ENCODE measurements at regions of chr6 and their contacts with region 1.

Region 1: DNA sequence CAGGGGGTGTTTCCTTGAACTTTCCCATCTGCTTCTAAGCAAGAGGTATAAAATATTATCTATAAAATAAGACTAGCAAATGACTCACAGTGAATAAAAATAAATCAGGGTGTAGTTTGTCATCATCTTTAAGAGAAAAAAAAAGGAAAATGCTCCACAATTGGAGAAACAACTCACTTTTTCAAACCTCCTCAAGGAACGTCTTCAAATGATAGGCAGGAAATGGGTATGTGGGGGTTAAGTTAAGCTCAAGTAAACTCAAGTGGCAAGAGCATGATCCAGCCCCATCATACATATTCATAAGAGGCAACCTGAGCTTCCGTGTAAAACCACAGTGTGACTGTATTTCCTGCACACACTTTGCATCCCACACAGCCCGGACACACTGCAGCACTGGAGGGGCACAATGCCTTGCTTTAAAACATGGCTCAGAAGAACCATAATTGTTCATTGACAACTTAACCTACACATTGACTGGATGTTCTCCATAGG is 58.5 kb upstream of the CEP85L start:
- DNase-seq: peak; percentile 25 to 87 (median 83)
- ATAC-seq: peak; percentile 93
- H3K4me3 ChIP-seq: peak overlapping the region; percentile 91
- H3K4me3 Mint-ChIP-seq: peak overlapping the region; percentile 95 to 100 (median 97)
- H3K27ac ChIP-seq: peak overlapping the region; percentile 76
- H3K27ac Mint-ChIP-seq: peak overlapping the region; percentile 94 to 99 (median 97)
- H3K4me1 ChIP-seq: peaks cover 48 to 49% of the 10 kb centered on the region in 2 donors
- H3K4me1 Mint-ChIP-seq: peaks cover 47 to 81% (median 74%) of the 10 kb centered on the region in 7 donors
- H3K27me3 ChIP-seq: no peaks in the 10 kb centered on the region
- H3K27me3 Mint-ChIP-seq: no peaks in the 10 kb centered on the region

Region 2: DNA sequence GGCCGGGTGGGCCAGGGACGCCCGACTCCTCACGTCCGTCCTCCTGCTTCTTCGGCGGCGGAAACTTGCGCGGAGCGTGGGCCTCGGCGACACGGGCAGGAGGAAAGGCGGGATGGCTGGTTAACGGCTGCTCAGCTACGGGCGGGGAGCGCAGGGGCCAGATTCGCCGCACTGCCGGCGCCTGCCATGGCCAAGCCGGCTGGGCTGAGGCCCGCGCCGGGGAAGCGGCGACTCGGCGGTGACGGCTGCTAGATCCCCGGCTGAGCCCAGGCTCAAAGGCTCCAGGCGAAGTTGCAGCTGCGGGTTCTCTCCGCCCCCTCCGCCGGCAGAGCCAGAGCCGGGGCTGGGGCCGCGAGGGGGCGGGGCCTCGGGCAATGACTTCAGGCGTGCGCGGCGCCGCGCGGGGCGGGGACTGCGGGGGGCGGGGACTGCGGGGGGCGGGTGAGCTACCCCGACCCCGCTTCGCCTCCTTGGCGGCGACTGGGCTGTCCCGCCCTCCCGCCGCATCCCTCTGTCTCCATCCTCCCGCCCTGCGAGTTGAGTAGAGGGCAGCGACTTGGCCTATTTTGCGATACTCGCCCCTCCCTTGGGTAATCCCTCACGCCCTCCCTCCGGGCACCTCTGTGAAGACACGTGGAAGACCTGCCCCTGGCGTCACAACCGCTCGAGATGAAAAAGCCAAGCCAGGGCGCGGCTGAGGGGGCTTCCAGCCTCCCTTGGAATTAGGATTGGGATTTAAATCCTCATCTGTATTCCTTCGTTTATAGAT is 58.4 kb before region 1 on chr6 and contains the start of gene CEP85L:
- CTCF ChIA-PET with region 1: interaction called, 5 read pairs
- POLR2A ChIA-PET with region 1: interaction called, 25 read pairs
- intact Hi-C with region 1: loop called (anchors 1 kb)
- DNase-seq: peak; percentile 84 to 91 (median 89)
- ATAC-seq: peak; percentile 96
- H3K4me3 ChIP-seq: peak within 1 kb of the TSS; percentile 66
- H3K4me3 Mint-ChIP-seq: peak within 1 kb of the TSS; percentile 91 to 97 (median 94)
- H3K27ac ChIP-seq: peak within 1 kb of the TSS; percentile 87
- H3K27ac Mint-ChIP-seq: peak within 1 kb of the TSS; percentile 88 to 99 (median 94)
- H3K4me1 ChIP-seq: peaks cover 32 to 40% of the 10 kb centered on the region in 2 donors
- H3K4me1 Mint-ChIP-seq: peaks cover 33 to 73% (median 59%) of the 10 kb centered on the region in 7 donors
- H3K27me3 ChIP-seq: no peaks in the 10 kb centered on the region
- H3K27me3 Mint-ChIP-seq: no peaks in the 10 kb centered on the region
- total RNA-seq, gene CEP85L: 51.1 to 89.1 (median 78.6) TPM

Region 3: DNA sequence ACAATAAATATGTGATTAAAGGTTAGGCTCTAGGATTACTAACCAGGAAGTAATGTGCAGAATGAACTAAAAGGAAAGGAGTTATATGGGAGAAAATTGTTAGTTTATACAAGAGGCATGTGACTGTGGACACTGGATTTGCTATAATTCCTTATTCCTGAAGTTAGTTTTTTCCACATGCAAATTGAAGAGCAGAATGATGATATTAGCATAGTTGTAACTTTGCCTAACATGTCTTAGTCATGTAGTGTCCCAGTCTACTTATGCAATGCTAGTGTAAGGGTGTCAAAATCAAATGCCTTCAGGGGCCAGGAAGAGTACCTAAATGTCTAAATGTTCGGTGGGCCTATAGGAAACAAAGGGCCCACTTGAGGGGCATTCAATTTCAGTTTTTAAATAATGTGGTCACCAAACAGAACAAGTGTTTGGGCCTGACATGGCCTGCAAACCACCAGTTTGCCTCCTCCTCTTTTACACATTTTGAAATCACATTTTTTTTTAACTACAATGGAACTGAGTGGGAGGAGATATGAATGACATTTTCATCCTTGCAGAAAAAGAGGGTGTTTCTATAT is 30.5 kb before region 1 on chr6:
- CTCF ChIA-PET with region 1: interaction called, 4 read pairs
- POLR2A ChIA-PET with region 1: interaction called, 30 read pairs
- intact Hi-C with region 1: loop called (anchors 1 to 2 kb)
- DNase-seq: no peak
- ATAC-seq: no peak
- H3K4me3 ChIP-seq: no peak overlapping the region
- H3K4me3 Mint-ChIP-seq: peak overlapping the region in 6 of 10 donors; percentile 18 to 39 (median 33)
- H3K27ac ChIP-seq: no peak overlapping the region
- H3K27ac Mint-ChIP-seq: peak overlapping the region in 5 of 9 donors; percentile 18 to 90 (median 50)
- H3K4me1 ChIP-seq: peaks cover 11 to 30% of the 10 kb centered on the region in 2 donors
- H3K4me1 Mint-ChIP-seq: peaks cover 45 to 91% (median 84%) of the 10 kb centered on the region in 7 donors
- H3K27me3 ChIP-seq: no peaks in the 10 kb centered on the region
- H3K27me3 Mint-ChIP-seq: no peaks in the 10 kb centered on the region

Region 4: DNA sequence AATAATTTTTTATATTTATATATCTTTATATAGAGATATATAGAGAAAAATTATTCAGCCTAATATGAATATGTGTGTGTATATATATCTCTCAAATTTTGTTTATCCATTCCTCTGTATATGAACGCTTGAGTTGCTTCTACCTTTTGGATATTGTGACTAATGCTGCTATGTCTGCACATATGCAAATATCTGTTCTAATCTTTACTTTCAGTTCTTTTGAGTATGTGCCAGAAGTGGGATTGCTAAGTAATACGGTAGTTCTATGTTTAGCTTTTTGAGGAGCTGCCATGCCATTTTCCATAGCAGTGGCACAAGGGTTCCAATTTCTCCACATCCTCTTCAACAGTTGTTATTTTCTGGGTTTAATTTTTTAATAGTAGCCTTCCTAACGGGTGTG is 14.3 kb after region 1 on chr6:
- CTCF ChIA-PET with region 1: interaction called, 20 read pairs
- POLR2A ChIA-PET with region 1: interaction called, 90 read pairs
- intact Hi-C with region 1: loop called (anchors 1 kb)
- DNase-seq: peak in 1 of 9 donors; percentile 34
- ATAC-seq: no peak
- H3K4me3 ChIP-seq: peak overlapping the region; percentile 10
- H3K4me3 Mint-ChIP-seq: peak overlapping the region in 7 of 10 donors; percentile 49 to 78 (median 60)
- H3K27ac ChIP-seq: no peak overlapping the region
- H3K27ac Mint-ChIP-seq: peak overlapping the region in 8 of 9 donors; percentile 17 to 99 (median 60)
- H3K4me1 ChIP-seq: peaks cover 18 to 55% of the 10 kb centered on the region in 2 donors
- H3K4me1 Mint-ChIP-seq: peaks cover 40 to 93% (median 80%) of the 10 kb centered on the region in 7 donors
- H3K27me3 ChIP-seq: no peaks in the 10 kb centered on the region
- H3K27me3 Mint-ChIP-seq: no peaks in the 10 kb centered on the region

Region 5: DNA sequence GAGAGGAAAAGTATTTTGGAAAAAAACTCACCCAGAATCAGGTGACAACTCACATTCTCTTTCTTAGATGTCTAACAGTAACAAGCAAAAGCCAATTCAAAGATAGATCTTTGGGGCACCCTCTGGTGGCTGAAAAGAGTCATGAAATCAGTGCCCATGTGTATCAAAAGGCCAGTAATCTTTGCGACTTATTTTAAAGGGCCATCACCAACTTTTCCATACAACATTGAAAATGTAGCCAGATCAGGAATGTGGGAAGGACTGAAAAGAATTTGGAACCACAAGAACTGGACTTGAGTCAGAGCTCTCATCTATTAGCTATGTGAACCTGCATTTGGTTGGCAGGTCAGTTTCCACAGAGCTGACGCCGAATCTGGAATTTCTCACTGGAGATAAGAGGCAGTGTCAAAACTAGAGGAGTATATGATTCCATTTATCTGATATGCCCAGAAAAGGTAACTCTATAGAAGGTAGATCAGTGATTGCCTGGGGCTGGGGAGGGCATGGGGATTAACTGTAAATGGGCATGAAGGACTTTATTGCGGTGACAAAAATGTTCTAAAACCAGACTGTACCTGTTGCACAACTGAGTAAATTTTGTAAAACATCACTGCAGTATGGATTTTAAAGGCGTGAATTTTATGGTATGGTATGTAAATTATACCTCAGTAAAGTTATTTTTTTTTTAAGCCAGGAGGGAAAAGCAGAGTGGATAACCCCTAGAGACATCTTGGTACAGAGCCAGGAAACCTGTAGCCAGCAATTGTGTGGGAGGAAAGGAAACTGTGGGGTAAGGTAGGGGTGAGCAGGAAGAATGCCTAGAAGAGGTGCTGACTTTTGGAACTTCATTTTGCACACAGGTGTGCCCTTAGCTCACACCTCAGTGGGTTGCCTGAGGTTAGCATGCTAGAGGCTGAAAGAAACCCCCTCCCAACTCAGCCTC is 67.0 kb after region 1 on chr6:
- CTCF ChIA-PET with region 1: interaction called, 3 read pairs
- POLR2A ChIA-PET with region 1: interaction called, 16 read pairs
- intact Hi-C with region 1: loop called (anchors 1 kb)
- DNase-seq: peak in 8 of 9 donors; percentile 42 to 77 (median 65)
- ATAC-seq: peak; percentile 92
- H3K4me3 ChIP-seq: no peak overlapping the region
- H3K4me3 Mint-ChIP-seq: peak overlapping the region; percentile 1 to 75 (median 48)
- H3K27ac ChIP-seq: no peak overlapping the region
- H3K27ac Mint-ChIP-seq: peak overlapping the region in 8 of 9 donors; percentile 12 to 87 (median 75)
- H3K4me1 ChIP-seq: peaks cover 4 to 11% of the 10 kb centered on the region in 2 donors
- H3K4me1 Mint-ChIP-seq: peaks cover 16 to 31% (median 23%) of the 10 kb centered on the region in 7 donors
- H3K27me3 ChIP-seq: no peaks in the 10 kb centered on the region
- H3K27me3 Mint-ChIP-seq: peaks cover 0 to 17% (median 0%) of the 10 kb centered on the region in 5 donors

Region 6: GRCh38 chr6:120384671-120385070 is 1674.8 kb after region 1 on chr6:
- CTCF ChIA-PET with region 1: no interaction called
- POLR2A ChIA-PET with region 1: no interaction called
- intact Hi-C with region 1: no loop called
- DNase-seq: no peak
- ATAC-seq: no peak
- H3K4me3 ChIP-seq: no peak overlapping the region
- H3K4me3 Mint-ChIP-seq: no peak overlapping the region
- H3K27ac ChIP-seq: no peak overlapping the region
- H3K27ac Mint-ChIP-seq: no peak overlapping the region
- H3K4me1 ChIP-seq: no peaks in the 10 kb centered on the region
- H3K4me1 Mint-ChIP-seq: no peaks in the 10 kb centered on the region
- H3K27me3 ChIP-seq: no peaks in the 10 kb centered on the region
- H3K27me3 Mint-ChIP-seq: no peaks in the 10 kb centered on the region